Naive thymus-derived CD4-positive, alpha-beta T cell (primary cell): ENCODE measurements at regions of chr9 and their contacts with region 1.

Region 1: GRCh38 chr9:120868676-120869359 is 8.2 kb downstream of the PHF19 start:
- DNase-seq: peak; percentile 92 to 97 (median 95)
- ATAC-seq: peak; percentile 91
- H3K4me3 ChIP-seq: peak overlapping the region; percentile 78
- H3K4me3 Mint-ChIP-seq: peak overlapping the region; percentile 49 to 95 (median 91)
- H3K27ac ChIP-seq: peak overlapping the region; percentile 77
- H3K27ac Mint-ChIP-seq: peak overlapping the region; percentile 79 to 97 (median 94)
- H3K4me1 ChIP-seq: peaks cover 7 to 10% of the 10 kb centered on the region in 2 donors
- H3K4me1 Mint-ChIP-seq: peaks cover 13 to 49% (median 24%) of the 10 kb centered on the region in 7 donors
- H3K27me3 ChIP-seq: no peaks in the 10 kb centered on the region
- H3K27me3 Mint-ChIP-seq: no peaks in the 10 kb centered on the region

Region 2: GRCh38 chr9:120755827-120756434 is 112.9 kb before region 1 on chr9:
- CTCF ChIA-PET with region 1: no interaction called
- POLR2A ChIA-PET with region 1: no interaction called
- intact Hi-C with region 1: loop called in 1 of 2 experiments (anchors 1 kb)
- DNase-seq: peak; percentile 42 to 80 (median 65)
- ATAC-seq: peak; percentile 83
- H3K4me3 ChIP-seq: no peak overlapping the region
- H3K4me3 Mint-ChIP-seq: no peak overlapping the region
- H3K27ac ChIP-seq: peak overlapping the region; percentile 22
- H3K27ac Mint-ChIP-seq: peak overlapping the region in 8 of 9 donors; percentile 5 to 77 (median 42)
- H3K4me1 ChIP-seq: no peaks in the 10 kb centered on the region
- H3K4me1 Mint-ChIP-seq: peaks cover 3 to 16% (median 7%) of the 10 kb centered on the region in 7 donors
- H3K27me3 ChIP-seq: no peaks in the 10 kb centered on the region
- H3K27me3 Mint-ChIP-seq: no peaks in the 10 kb centered on the region

Region 3: GRCh38 chr9:120892748-120893610 is 24.2 kb after region 1 on chr9:
- CTCF ChIA-PET with region 1: interaction called, 13 read pairs
- POLR2A ChIA-PET with region 1: interaction called, 703 read pairs
- intact Hi-C with region 1: loop called in 1 of 2 experiments (anchors 1 kb)
- DNase-seq: peak in 7 of 9 donors; percentile 43 to 77 (median 64)
- ATAC-seq: peak; percentile 65
- H3K4me3 ChIP-seq: peak overlapping the region; percentile 17
- H3K4me3 Mint-ChIP-seq: peak overlapping the region; percentile 54 to 85 (median 80)
- H3K27ac ChIP-seq: peak overlapping the region; percentile 90
- H3K27ac Mint-ChIP-seq: peak overlapping the region; percentile 92 to 100 (median 99)
- H3K4me1 ChIP-seq: peaks cover 64 to 91% of the 10 kb centered on the region in 2 donors
- H3K4me1 Mint-ChIP-seq: peaks cover 40 to 88% (median 74%) of the 10 kb centered on the region in 7 donors
- H3K27me3 ChIP-seq: no peaks in the 10 kb centered on the region
- H3K27me3 Mint-ChIP-seq: no peaks in the 10 kb centered on the region

Region 4: GRCh38 chr9:120982836-120983235 is 114.0 kb after region 1 on chr9:
- CTCF ChIA-PET with region 1: interaction called, 5 read pairs
- POLR2A ChIA-PET with region 1: no interaction called
- intact Hi-C with region 1: loop called in 1 of 2 experiments (anchors 2 kb)
- DNase-seq: no peak
- ATAC-seq: no peak
- H3K4me3 ChIP-seq: no peak overlapping the region
- H3K4me3 Mint-ChIP-seq: no peak overlapping the region
- H3K27ac ChIP-seq: no peak overlapping the region
- H3K27ac Mint-ChIP-seq: no peak overlapping the region
- H3K4me1 ChIP-seq: no peaks in the 10 kb centered on the region
- H3K4me1 Mint-ChIP-seq: peaks cover 0 to 10% (median 4%) of the 10 kb centered on the region in 7 donors
- H3K27me3 ChIP-seq: no peaks in the 10 kb centered on the region
- H3K27me3 Mint-ChIP-seq: peaks cover 0 to 30% (median 0%) of the 10 kb centered on the region in 5 donors

Region 5: GRCh38 chr9:121121582-121122087 is 252.8 kb after region 1 on chr9:
- CTCF ChIA-PET with region 1: interaction called, 4 read pairs
- POLR2A ChIA-PET with region 1: interaction called, 3 read pairs
- intact Hi-C with region 1: loop called (anchors 2 kb)
- DNase-seq: peak; percentile 83 to 98 (median 97)
- ATAC-seq: peak; percentile 100
- H3K4me3 ChIP-seq: peak overlapping the region; percentile 87
- H3K4me3 Mint-ChIP-seq: peak overlapping the region; percentile 87 to 96 (median 89)
- H3K27ac ChIP-seq: peak overlapping the region; percentile 88
- H3K27ac Mint-ChIP-seq: peak overlapping the region; percentile 87 to 99 (median 93)
- H3K4me1 ChIP-seq: peaks cover 20 to 26% of the 10 kb centered on the region in 2 donors
- H3K4me1 Mint-ChIP-seq: peaks cover 27 to 63% (median 54%) of the 10 kb centered on the region in 7 donors
- H3K27me3 ChIP-seq: no peaks in the 10 kb centered on the region
- H3K27me3 Mint-ChIP-seq: no peaks in the 10 kb centered on the region